ENCODE measurements at regions of chr4 and their contacts with region 1.

Region 1: GRCh38 chr4:36761607-36762006 is 480.2 kb downstream of the DTHD1 start:
- DNase-seq: no peak
- H3K4me3 ChIP-seq: no peak overlapping the region
- H3K27ac ChIP-seq: no peak overlapping the region
- H3K4me1 ChIP-seq: no peaks in the 10 kb centered on the region
- H3K27me3 ChIP-seq: no peaks in the 10 kb centered on the region
- CTCF ChIP-seq: no peak
- EP300 ChIP-seq: no peak
- POLR2A ChIP-seq: no peak

Region 2: DNA sequence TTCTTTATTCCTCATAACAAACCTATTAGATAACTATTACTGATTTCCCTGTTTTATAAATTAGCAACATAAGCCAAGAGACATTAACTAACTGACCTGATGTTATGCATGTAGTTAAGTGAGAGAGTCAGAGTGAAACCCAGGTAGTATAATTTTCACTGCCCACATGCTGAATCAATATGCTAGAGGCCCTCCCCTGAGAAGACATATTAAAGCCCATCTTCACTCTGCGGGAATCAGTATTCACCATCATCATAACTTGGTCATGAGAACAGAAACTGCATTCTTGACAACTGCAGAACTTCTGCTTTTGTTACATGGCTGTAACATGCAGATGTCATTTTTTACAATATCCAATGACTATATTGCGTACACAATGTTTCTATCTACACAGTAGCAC is 1841.6 kb before region 1 on chr4:
- in situ Hi-C with region 1: no loop called
- intact Hi-C with region 1: no loop called
- DNase-seq: no peak
- H3K4me3 ChIP-seq: no peak overlapping the region
- H3K27ac ChIP-seq: no peak overlapping the region
- H3K4me1 ChIP-seq: no peaks in the 10 kb centered on the region
- H3K27me3 ChIP-seq: no peaks in the 10 kb centered on the region
- CTCF ChIP-seq: no peak
- EP300 ChIP-seq: no peak
- POLR2A ChIP-seq: no peak

Region 3: DNA sequence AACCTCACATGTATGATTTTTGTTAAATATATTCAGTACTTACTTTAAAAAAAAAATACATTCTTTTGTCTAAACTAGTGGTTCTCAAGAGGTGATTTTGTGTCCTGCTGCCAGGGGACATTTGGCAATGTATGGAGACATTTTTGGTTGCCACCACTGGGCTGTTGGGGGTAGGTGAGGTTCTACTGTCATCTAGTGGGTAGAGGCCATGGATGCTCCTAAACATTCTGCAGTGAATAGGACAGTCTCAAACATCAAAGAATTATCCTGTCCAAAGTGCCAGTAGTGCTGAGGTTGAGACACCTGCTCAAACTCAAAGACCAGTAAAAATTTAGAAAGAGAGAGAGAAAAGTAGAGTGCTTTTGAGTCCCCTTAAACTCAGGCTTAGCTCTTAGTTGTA is 1032.0 kb after region 1 on chr4:
- in situ Hi-C with region 1: no loop called
- intact Hi-C with region 1: loop called (anchors 5 kb)
- DNase-seq: no peak
- H3K4me3 ChIP-seq: no peak overlapping the region
- H3K27ac ChIP-seq: no peak overlapping the region
- H3K4me1 ChIP-seq: no peaks in the 10 kb centered on the region
- H3K27me3 ChIP-seq: no peaks in the 10 kb centered on the region
- CTCF ChIP-seq: peak; percentile 34 to 48 (median 40)
- EP300 ChIP-seq: no peak
- POLR2A ChIP-seq: no peak